ENCODE measurements at regions of chr17 and their contacts with region 1.

Region 1: GRCh38 chr17:75904749-75905521 is at the start of gene MRPL38:
- DNase-seq: peak; percentile 99
- H3K4me3 ChIP-seq: peak within 1 kb of the TSS; percentile 70 to 88
- H3K27ac ChIP-seq: peak within 1 kb of the TSS; percentile 66 to 86
- H3K4me1 ChIP-seq: peaks cover 4 to 13% of the 10 kb centered on the region in 2 experiments; a peak in 2 of 4 replicates
- H3K27me3 ChIP-seq: no peaks in the 10 kb centered on the region
- CTCF ChIP-seq: peak; percentile 99
- EP300 ChIP-seq: peak in 1 of 2 experiments; percentile 56; a peak in 1 of 4 replicates
- RAD21 ChIP-seq: peak; percentile 94
- polyA plus RNA-seq, gene MRPL38: 62.5 and 93.9 TPM in 2 replicates

Region 2: GRCh38 chr17:75814900-75815373 is 90.0 kb before region 1 on chr17:
- CTCF ChIA-PET with region 1: no interaction called
- POLR2A ChIA-PET with region 1: no interaction called
- DNase-seq: peak; percentile 47
- H3K4me3 ChIP-seq: no peak overlapping the region
- H3K27ac ChIP-seq: peak overlapping the region; percentile 29 to 63; a peak in 3 of 4 replicates
- H3K4me1 ChIP-seq: peaks cover 0 to 10% of the 10 kb centered on the region in 2 experiments; a peak in 3 of 4 replicates
- H3K27me3 ChIP-seq: no peaks in the 10 kb centered on the region
- CTCF ChIP-seq: no peak
- EP300 ChIP-seq: no peak
- RAD21 ChIP-seq: no peak

Region 3: DNA sequence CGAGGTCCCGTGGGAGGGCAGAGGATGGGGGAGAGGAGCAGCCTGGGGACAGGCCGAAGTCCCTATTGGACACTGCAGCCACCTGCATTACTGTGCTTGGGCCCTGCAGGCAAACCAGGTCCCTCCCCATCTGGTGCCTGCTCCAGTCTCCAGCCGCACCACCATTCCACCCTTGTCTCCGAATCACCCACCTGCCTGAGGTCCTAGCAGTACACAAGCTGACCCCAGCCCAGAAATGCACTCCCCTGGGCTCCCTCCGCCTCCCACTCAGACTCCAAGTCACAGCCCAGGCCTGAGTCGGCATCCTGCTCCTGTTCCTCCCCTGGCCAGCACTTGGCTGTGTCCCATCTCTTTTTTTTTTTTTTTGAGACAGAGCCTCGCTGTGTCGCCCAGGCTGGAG is 67.1 kb before region 1 on chr17:
- CTCF ChIA-PET with region 1: no interaction called
- POLR2A ChIA-PET with region 1: no interaction called
- DNase-seq: no peak
- H3K4me3 ChIP-seq: no peak overlapping the region
- H3K27ac ChIP-seq: no peak overlapping the region; a peak in 1 of 4 replicates
- H3K4me1 ChIP-seq: peaks cover 0 to 4% of the 10 kb centered on the region in 2 experiments; a peak in 1 of 4 replicates
- H3K27me3 ChIP-seq: no peaks in the 10 kb centered on the region
- CTCF ChIP-seq: no peak
- EP300 ChIP-seq: no peak
- RAD21 ChIP-seq: no peak

Region 4: GRCh38 chr17:75877752-75878173 is 27.2 kb before region 1 on chr17:
- CTCF ChIA-PET with region 1: interaction called, 214 read pairs
- POLR2A ChIA-PET with region 1: interaction called, 6 read pairs
- DNase-seq: peak; percentile 93
- H3K4me3 ChIP-seq: peak overlapping the region; percentile 34 to 49
- H3K27ac ChIP-seq: peak overlapping the region in 1 of 2 experiments; percentile 87; a peak in 1 of 4 replicates
- H3K4me1 ChIP-seq: peaks cover 27 to 32% of the 10 kb centered on the region in 2 experiments; a peak in 3 of 4 replicates
- H3K27me3 ChIP-seq: no peaks in the 10 kb centered on the region
- CTCF ChIP-seq: peak; percentile 15; the same call in 1 of the 2 replicates
- EP300 ChIP-seq: no peak
- RAD21 ChIP-seq: peak; percentile 34; the same call in 1 of the 2 replicates

Region 5: DNA sequence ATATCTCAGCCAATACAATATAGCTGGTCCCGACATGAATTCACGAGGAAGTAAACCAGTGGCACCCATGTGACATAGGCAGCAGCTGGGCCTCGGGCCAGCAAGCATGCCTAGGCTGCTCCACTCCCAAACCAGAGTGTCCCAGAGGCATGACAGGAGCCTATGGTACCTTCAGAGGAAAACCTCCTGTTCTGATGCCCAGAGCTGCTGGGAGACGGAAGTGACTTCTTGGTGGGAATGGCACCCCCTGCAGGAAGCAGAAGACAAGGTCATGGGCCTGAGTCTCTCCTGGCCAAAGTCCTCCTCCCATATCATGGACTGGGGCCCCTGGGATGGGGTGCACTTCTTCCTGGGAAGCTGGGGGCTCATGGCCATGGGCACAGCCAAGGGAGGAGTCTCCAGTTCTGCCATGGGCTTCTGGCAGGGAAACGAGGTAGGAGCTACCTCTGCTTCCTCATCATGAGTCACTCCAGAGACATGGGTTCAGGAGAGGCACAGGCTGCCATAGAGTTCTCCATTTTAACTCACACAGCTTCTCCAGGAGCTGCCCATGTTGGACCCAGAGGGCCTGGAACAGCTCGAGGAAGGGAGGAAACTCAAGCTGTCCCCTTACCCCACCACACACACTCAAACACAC is 22.5 kb after region 1 on chr17:
- CTCF ChIA-PET with region 1: interaction called, 26 read pairs
- POLR2A ChIA-PET with region 1: interaction called, 4 read pairs
- DNase-seq: peak; percentile 75
- H3K4me3 ChIP-seq: no peak overlapping the region
- H3K27ac ChIP-seq: no peak overlapping the region
- H3K4me1 ChIP-seq: no peaks in the 10 kb centered on the region
- H3K27me3 ChIP-seq: no peaks in the 10 kb centered on the region
- CTCF ChIP-seq: peak; percentile 46
- EP300 ChIP-seq: no peak
- RAD21 ChIP-seq: peak; percentile 29; the same call in 1 of the 2 replicates

Region 6: GRCh38 chr17:75940724-75941441 is 35.9 kb after region 1 on chr17 and contains the start of gene FBF1:
- CTCF ChIA-PET with region 1: interaction called, 10 read pairs
- POLR2A ChIA-PET with region 1: no interaction called
- DNase-seq: peak; percentile 100
- H3K4me3 ChIP-seq: peak within 1 kb of the TSS; percentile 71 to 91
- H3K27ac ChIP-seq: peak within 1 kb of the TSS; percentile 54 to 62
- H3K4me1 ChIP-seq: peaks cover 0 to 8% of the 10 kb centered on the region in 2 experiments; a peak in 1 of 4 replicates
- H3K27me3 ChIP-seq: no peaks in the 10 kb centered on the region
- CTCF ChIP-seq: 0 out of 2 replicates have a peak, but pooled peaks have one; percentile 13
- EP300 ChIP-seq: peak in 1 of 2 experiments; percentile 48; a peak in 1 of 4 replicates
- RAD21 ChIP-seq: no peak
- polyA plus RNA-seq, gene FBF1: 19.0 and 19.7 TPM in 2 replicates

Region 7: GRCh38 chr17:76005263-76006149 is 100.6 kb after region 1 on chr17:
- CTCF ChIA-PET with region 1: interaction called, 142 read pairs
- POLR2A ChIA-PET with region 1: interaction called, 7 read pairs
- DNase-seq: peak; percentile 92
- H3K4me3 ChIP-seq: no peak overlapping the region; a peak in 1 of 4 replicates
- H3K27ac ChIP-seq: peak overlapping the region in 1 of 2 experiments; percentile 38; a peak in 1 of 4 replicates
- H3K4me1 ChIP-seq: peaks cover 0 to 10% of the 10 kb centered on the region in 2 experiments; a peak in 2 of 4 replicates
- H3K27me3 ChIP-seq: no peaks in the 10 kb centered on the region
- CTCF ChIP-seq: peak; percentile 94
- EP300 ChIP-seq: no peak
- RAD21 ChIP-seq: peak; percentile 83

Measured in SK-N-SH (cell line).